Gastrocnemius medialis (tissue), 4 donors: ENCODE measurements at regions of chr20 and their contacts with region 1.

Region 1: GRCh38 chr20:44210422-44211176 is at the start of gene OSER1:
- DNase-seq: peak; percentile 98 to 99
- ATAC-seq: peak; percentile 83 to 85
- H3K4me3 ChIP-seq: peak within 1 kb of the TSS; percentile 90 to 98 (median 95)
- H3K27ac ChIP-seq: peak within 1 kb of the TSS; percentile 97 to 100 (median 98)
- H3K4me1 ChIP-seq: peaks cover 44 to 50% of the 10 kb centered on the region in 2 donors
- H3K27me3 ChIP-seq: no peaks in the 10 kb centered on the region
- CTCF ChIP-seq: no peak
- POLR2A ChIP-seq: peak; percentile 97 to 98
- total RNA-seq, gene OSER1: 73.0 to 114 (median 94.5) TPM

Region 2: DNA sequence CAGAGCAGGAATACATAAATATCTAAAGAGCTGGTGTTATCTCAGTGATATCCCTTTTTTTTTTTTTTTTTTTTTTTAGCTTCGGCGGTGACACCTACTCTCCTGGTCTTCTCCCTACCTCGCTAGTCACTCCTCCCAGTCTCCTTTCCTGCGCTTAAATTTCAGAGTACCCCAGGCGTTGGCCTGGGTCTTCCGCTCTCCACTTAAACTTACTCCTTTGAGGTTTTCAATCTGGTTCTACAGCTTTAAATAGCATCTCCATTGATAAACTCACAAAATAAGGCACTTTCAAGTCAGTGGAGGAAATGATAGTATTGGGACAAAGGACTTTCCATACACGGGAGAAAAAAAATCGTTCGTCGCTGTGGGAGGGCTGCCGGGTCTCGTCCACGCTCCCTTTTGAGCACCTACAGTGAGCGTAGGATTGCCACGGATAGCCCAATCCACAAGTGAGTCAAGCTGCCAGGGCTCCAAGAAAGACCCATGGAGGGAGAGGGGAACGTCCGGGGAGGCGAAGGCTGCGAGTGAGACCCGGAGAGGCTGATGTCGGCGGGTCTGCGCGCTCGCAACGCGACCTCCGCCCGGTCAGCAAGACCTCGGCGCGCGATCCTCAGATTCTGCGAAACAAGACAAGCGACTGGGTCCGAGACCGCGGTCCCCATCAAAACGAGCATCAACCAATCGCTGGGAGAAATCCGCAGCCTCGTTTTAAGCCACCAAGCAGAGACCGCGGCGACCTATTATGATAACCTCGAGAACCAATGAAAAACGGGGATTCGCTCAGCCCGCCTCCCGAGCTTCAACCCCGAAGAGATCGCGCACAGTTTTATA is 753.6 kb before region 1 on chr20:
- in situ Hi-C with region 1: loop called in 1 of 4 experiments (anchors 25 kb)
- intact Hi-C with region 1: loop called (anchors 10 kb)
- DNase-seq: peak; percentile 89 to 90
- ATAC-seq: peak; percentile 96 to 98
- H3K4me3 ChIP-seq: peak overlapping the region; percentile 88 to 97 (median 96)
- H3K27ac ChIP-seq: peak overlapping the region; percentile 99 to 100 (median 100)
- H3K4me1 ChIP-seq: peaks cover 11 to 25% of the 10 kb centered on the region in 2 donors
- H3K27me3 ChIP-seq: no peaks in the 10 kb centered on the region
- CTCF ChIP-seq: no peak
- POLR2A ChIP-seq: no peak

Region 3: DNA sequence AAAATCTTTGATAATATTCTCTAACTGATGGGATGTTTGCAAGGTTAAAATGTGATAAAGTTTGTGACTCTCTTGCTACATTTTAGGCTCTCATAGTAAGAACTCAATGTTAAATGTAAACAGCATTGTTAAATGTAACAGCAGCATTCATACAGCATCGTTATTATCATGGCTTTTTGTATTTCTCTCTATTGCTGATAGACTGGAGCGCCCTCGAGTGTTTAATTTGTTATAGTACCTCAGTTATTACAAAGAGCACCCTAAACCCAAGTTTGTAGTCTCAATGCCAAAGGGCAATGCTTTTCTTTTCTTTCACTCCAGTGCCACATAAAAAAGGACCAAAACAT is 250.2 kb after region 1 on chr20:
- in situ Hi-C with region 1: loop called in 3 of 4 experiments (anchors 25 kb)
- intact Hi-C with region 1: no loop called
- DNase-seq: no peak
- ATAC-seq: peak in 1 of 2 donors; percentile 50
- H3K4me3 ChIP-seq: no peak overlapping the region
- H3K27ac ChIP-seq: no peak overlapping the region
- H3K4me1 ChIP-seq: no peaks in the 10 kb centered on the region
- H3K27me3 ChIP-seq: no peaks in the 10 kb centered on the region
- CTCF ChIP-seq: peak in 3 of 5 experiments; percentile 15 to 31 (median 19)
- POLR2A ChIP-seq: no peak

Region 4: GRCh38 chr20:44576297-44576696 is 365.7 kb after region 1 on chr20:
- in situ Hi-C with region 1: loop called in 1 of 4 experiments (anchors 25 kb)
- intact Hi-C with region 1: loop called (anchors 10 kb)
- DNase-seq: no peak
- ATAC-seq: no peak
- H3K4me3 ChIP-seq: no peak overlapping the region
- H3K27ac ChIP-seq: peak overlapping the region; percentile 95 to 98 (median 98)
- H3K4me1 ChIP-seq: peaks cover 76 to 90% of the 10 kb centered on the region in 2 donors
- H3K27me3 ChIP-seq: no peaks in the 10 kb centered on the region
- CTCF ChIP-seq: peak; percentile 4 to 50 (median 37)
- POLR2A ChIP-seq: no peak

Region 5: DNA sequence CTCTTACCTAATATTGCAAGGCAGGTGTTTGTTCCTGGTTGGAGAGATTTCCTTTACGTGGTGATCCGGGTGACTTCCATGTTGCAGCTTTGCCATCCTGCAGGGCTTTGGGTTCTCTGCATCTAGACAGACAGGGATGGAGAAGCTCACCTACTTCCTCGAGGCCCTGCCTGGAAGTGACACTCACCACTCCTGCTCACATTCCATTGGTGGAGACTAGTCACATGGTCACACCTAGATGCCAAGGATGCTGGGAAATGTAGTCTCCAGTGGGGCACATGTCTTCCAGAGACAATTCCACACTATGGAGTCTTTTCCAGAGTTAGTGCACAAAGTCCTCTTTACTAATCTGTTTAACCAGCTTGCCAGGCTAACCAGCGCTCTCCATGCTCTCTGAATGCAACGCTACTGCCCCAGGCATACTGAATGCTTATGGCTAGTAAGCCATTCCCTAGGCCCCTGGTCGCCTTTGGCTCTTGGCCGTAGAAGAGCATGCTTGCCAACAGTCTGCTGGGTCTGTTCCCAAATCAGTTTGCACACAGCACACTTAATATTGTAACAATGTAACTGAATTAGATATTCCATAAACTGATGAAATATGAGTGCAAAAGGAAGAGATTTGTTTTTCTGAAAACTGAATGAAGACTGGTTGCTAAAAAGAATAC is 528.3 kb after region 1 on chr20:
- in situ Hi-C with region 1: loop called in 2 of 4 experiments (anchors 25 kb)
- intact Hi-C with region 1: loop called (anchors 5 kb)
- DNase-seq: peak in 1 of 2 donors; percentile 69
- ATAC-seq: peak; percentile 44 to 60
- H3K4me3 ChIP-seq: no peak overlapping the region
- H3K27ac ChIP-seq: peak overlapping the region; percentile 70 to 79 (median 76)
- H3K4me1 ChIP-seq: peaks cover 15% of the 10 kb centered on the region in 2 donors
- H3K27me3 ChIP-seq: no peaks in the 10 kb centered on the region
- CTCF ChIP-seq: no peak
- POLR2A ChIP-seq: no peak

Region 6: GRCh38 chr20:44960103-44960852 is 749.7 kb after region 1 on chr20 and contains the start of gene TOMM34:
- in situ Hi-C with region 1: no loop called
- intact Hi-C with region 1: loop called (anchors 5 kb)
- DNase-seq: peak; percentile 90 to 91
- ATAC-seq: peak; percentile 96 to 97
- H3K4me3 ChIP-seq: peak within 1 kb of the TSS; percentile 70 to 96 (median 82)
- H3K27ac ChIP-seq: peak within 1 kb of the TSS; percentile 80 to 91 (median 86)
- H3K4me1 ChIP-seq: peaks cover 17 to 20% of the 10 kb centered on the region in 2 donors
- H3K27me3 ChIP-seq: no peaks in the 10 kb centered on the region
- CTCF ChIP-seq: peak in 1 of 5 experiments; percentile 8
- POLR2A ChIP-seq: peak; percentile 82 to 92
- total RNA-seq, gene TOMM34: 9.8 to 19.2 (median 17.0) TPM

Region 7: GRCh38 chr20:45971675-45972499 is 1761.3 kb after region 1 on chr20 and contains the start of gene ZNF335:
- in situ Hi-C with region 1: no loop called
- intact Hi-C with region 1: loop called (anchors 5 kb)
- DNase-seq: peak; percentile 89 to 93
- ATAC-seq: peak; percentile 72 to 87
- H3K4me3 ChIP-seq: peak within 1 kb of the TSS; percentile 74 to 97 (median 88)
- H3K27ac ChIP-seq: peak within 1 kb of the TSS; percentile 90 to 99 (median 96)
- H3K4me1 ChIP-seq: peaks cover 32 to 36% of the 10 kb centered on the region in 2 donors
- H3K27me3 ChIP-seq: no peaks in the 10 kb centered on the region
- CTCF ChIP-seq: peak; percentile 39 to 72 (median 70)
- POLR2A ChIP-seq: peak; percentile 73 to 93
- total RNA-seq, gene ZNF335: 8.3 to 19.1 (median 12.7) TPM